Caco-2 (cell line): ENCODE measurements at regions of chr6 and their contacts with region 1.

Region 1: GRCh38 chr6:142361782-142362750 is 60.3 kb downstream of the ADGRG6 start:
- DNase-seq: peak; percentile 63 to 69
- H3K4me3 ChIP-seq: no peak overlapping the region
- H3K4me3 Mint-ChIP-seq: peak overlapping the region; percentile 70
- H3K27ac Mint-ChIP-seq: peak overlapping the region; percentile 74
- H3K4me1 ChIP-seq: peaks cover 59% of the 10 kb centered on the region
- H3K4me1 Mint-ChIP-seq: peaks cover 25% of the 10 kb centered on the region
- H3K27me3 ChIP-seq: no peaks in the 10 kb centered on the region
- H3K27me3 Mint-ChIP-seq: no peaks in the 10 kb centered on the region
- CTCF ChIP-seq: no peak

Region 2: GRCh38 chr6:142307963-142308748 is 53.9 kb before region 1 on chr6:
- CTCF ChIA-PET with region 1: no interaction called
- POLR2A ChIA-PET with region 1: no interaction called
- intact Hi-C with region 1: loop called (anchors 1 kb)
- DNase-seq: no peak
- H3K4me3 ChIP-seq: no peak overlapping the region
- H3K4me3 Mint-ChIP-seq: peak overlapping the region; percentile 24
- H3K27ac Mint-ChIP-seq: no peak overlapping the region
- H3K4me1 ChIP-seq: peaks cover 78% of the 10 kb centered on the region
- H3K4me1 Mint-ChIP-seq: peaks cover 40% of the 10 kb centered on the region
- H3K27me3 ChIP-seq: no peaks in the 10 kb centered on the region
- H3K27me3 Mint-ChIP-seq: no peaks in the 10 kb centered on the region
- CTCF ChIP-seq: no peak